Posterior cingulate gyrus (tissue), 11 donors: ENCODE measurements at regions of chrX and their contacts with region 1.

Region 1: DNA sequence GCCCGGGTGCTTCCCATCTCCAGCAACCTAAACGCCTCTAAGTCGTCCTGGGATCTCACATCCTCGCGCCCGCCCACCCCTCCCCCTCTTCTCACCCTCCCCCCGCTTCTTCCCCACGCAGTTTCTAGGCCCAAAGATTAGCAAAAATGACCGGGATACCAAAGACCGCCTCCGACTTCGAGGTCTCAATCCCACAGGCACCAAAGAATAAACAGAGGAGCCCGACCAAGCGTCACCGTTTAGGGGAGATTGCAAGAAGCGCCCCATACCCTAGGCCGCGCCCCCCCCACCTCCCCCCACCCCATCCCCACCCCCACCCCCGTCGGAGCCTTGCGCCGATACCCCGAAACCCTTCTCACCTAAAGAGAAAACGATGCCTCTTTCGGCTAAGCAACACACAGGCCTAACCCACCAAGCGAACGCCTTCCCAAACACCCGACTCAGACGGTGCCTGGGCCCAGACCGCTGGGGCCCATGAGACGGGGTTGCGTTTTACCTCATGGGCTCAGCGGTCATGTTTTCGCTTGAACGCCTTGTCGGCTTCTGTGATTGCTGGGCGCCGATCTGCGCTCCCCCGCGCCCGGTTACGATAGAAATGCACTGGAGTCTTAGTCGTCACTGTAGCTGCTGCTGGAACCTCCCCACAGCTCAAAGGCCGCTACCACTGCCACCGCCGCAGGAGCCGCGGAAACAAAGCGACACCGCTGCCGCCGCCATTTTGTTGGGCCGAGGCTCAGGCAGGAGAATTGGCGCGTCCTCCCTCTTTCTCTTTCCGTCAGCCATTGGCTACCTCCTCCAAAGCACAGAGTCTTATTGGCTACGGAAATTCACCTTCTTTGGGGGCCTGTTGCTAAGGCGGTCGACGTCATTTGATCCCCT is at the start of gene ATRX:
- DNase-seq: peak; percentile 44 to 95 (median 66)

Region 2: DNA sequence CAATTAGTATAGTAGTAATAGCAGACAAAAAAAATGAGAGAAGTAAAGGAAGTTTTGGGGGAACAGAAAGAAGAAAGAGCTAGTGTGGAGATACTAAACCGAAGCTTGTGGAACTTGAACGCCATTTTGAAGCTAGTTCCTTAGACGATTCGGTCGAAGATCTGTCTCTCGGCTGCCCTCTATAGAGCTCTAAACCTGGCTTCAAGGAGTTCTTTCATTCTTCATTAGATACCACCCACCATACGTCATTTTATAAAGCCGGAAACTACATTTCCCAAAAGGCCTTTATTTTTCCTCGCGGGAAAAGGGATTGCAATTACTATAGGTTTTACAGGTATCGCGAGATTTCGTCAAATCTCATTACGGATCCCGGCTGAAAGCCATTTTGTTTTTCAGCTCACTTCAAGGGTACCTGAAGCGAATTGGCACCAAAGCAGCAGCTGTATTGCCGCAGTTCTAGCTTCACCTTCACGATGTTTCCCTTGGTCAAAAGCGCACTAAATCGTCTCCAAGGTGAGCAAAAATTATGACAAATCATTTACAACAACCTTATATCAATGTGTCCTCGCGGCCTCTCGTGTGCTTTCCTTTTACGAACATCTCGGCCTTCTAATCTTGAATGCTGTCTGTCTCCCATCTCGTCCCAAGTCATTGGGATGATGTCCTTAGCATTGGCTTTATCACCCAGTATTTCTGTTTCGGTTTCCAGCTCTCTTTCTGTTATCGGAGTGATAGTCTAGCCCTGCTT is 113.5 kb after region 1 on chrX and contains the start of gene COX7B:
- intact Hi-C with region 1: loop called (anchors 5 kb)
- DNase-seq: peak in 5 of 10 donors; percentile 16 to 52 (median 42)

Region 3: DNA sequence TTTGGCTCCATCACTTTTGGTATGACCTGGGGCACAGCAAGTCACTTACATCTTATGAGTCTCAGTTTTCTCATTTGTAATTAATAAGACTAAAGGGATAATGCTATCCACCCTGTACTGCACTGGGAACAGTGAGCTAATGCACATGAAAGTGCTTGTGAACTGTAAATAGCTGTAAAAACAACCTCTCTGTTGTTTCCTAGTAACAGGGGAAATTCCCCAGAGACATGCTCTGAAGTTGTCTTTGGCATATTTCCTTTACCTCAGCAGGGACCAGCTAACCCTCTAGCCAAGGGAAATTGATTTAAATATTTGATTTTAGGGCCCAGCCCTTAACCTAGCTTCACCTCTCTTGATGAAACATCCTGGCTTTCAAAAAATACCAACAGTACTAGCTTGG is 547.8 kb after region 1 on chrX:
- intact Hi-C with region 1: no loop called
- DNase-seq: no peak